Activated CD4-positive, alpha-beta memory T cell treated with anti-CD3 and anti-CD28 coated beads for 36 hours (primary cell): ENCODE measurements at regions of chr11 and their contacts with region 1.

Region 1: DNA sequence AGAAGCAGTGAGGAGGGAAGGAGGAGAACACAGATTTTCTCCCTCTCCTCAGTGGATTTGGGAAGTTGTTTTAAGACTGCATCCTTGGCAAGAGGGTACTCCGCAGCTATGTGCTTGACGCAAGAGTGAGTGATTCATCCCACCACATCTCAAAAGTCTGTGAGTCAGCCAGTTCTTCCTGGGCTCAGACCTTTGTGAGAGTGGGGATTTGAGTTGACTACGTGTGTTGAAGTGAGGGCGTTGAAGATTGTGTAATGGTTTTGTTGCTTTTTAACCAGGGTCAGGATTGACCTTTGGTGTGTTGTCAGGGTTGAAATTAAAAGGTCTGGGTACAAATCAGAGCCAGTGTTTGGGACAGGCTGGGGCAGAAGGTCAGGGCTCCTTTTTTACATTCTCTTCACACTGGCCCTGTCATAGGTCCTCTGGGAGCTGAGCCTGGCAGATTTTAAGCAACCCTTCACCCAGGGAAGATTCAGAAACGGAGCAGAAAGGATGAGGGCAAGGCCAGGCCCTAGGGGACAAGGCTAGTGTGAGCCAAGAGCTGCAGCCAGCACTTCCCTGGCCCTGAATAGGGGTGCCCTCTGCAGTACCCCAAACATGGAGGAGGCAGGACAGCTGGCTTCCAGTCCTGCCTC is 4.2 kb upstream of the C11orf86 start:
- DNase-seq: peak; percentile 64
- H3K4me3 Mint-ChIP-seq: no peak overlapping the region
- H3K27ac Mint-ChIP-seq: peak overlapping the region; percentile 25
- H3K4me1 Mint-ChIP-seq: peaks cover 15% of the 10 kb centered on the region
- H3K27me3 Mint-ChIP-seq: peaks cover 7% of the 10 kb centered on the region

Region 2: DNA sequence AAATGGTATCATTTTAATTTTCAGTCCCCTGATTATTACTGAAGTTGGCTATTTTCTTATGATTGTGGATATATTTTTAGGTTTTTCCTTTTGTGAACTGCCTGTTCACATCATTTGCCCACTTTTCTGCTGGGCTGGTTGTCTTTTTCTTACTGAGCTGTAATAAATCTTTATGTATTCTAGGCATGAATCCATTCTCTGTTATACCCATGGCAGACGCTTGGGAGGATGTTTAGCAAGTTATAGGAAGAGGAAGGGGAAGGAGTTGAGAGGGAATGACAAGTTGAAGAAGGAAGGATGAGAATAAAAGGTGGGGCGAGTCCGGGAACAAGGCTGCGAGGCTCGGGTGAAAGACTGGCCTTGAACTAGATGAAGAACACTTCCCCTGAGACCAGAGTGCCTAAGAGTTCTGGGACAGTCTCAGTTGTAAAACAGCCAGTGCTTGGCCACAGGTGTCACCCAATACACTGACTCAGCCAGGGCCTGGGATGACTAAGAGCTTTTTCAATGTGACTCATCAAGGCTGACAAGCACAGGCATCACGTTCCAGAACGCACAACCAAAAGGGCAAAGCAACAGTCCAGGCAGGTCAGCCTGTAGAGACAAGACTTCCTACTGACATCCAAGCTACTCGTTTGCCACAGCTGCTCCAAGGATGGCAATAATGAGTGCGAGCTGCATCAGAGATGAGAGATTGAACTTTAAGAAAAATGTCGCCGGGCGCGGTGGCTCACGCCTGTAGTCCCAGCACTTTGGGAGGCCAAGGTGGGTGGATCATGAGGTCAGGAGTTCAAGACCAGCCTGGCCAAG is 78.9 kb before region 1 on chr11:
- CTCF ChIA-PET with region 1: interaction called, 3 read pairs
- POLR2A ChIA-PET with region 1: no interaction called
- intact Hi-C with region 1: loop called (anchors 2 kb)
- DNase-seq: peak; percentile 89
- H3K4me3 Mint-ChIP-seq: no peak overlapping the region
- H3K27ac Mint-ChIP-seq: peak overlapping the region; percentile 23
- H3K4me1 Mint-ChIP-seq: peaks cover 11% of the 10 kb centered on the region
- H3K27me3 Mint-ChIP-seq: peaks cover 10% of the 10 kb centered on the region

Region 3: DNA sequence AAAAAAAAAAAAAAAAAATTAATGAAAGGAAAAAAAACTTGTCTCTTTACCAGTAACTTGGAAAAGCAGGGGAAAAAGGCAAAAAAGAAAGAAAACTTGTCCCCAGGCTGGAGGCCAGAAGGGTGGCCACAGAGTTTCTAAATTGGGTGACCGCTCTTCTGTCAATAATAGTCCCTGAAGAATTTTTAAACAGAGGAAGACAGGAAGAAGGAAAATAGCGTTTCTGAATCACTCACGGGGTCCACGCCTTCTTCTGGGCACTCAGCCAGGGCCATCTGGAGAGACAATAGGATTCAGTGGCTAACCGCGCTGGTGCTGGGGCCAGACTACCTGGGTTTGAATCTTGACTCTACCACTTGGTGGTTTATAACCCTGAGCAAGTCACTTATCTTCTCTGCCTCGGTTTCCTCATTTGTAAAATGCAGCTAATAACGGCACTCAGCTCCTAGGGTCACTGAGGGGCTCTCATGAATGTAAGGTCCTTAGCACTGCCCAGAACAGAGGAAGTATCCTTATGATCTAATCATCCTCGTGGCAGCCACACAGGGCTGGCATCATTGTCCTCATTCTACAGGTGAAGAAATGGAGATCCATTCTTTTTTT is 11.2 kb after region 1 on chr11:
- CTCF ChIA-PET with region 1: no interaction called
- POLR2A ChIA-PET with region 1: no interaction called
- intact Hi-C with region 1: no loop called
- DNase-seq: peak; percentile 48
- H3K4me3 Mint-ChIP-seq: no peak overlapping the region
- H3K27ac Mint-ChIP-seq: no peak overlapping the region
- H3K4me1 Mint-ChIP-seq: peaks cover 4% of the 10 kb centered on the region
- H3K27me3 Mint-ChIP-seq: peaks cover 4% of the 10 kb centered on the region